Aorta (tissue), 5 donors: ENCODE measurements at regions of chr15 and their contacts with region 1.

Region 1: GRCh38 chr15:85730001-85730820 is 64.5 kb downstream of the KLHL25 start:
- DNase-seq: no peak
- ATAC-seq: peak; percentile 85
- H3K4me3 ChIP-seq: no peak overlapping the region
- H3K27ac ChIP-seq: no peak overlapping the region
- H3K4me1 ChIP-seq: no peaks in the 10 kb centered on the region
- H3K27me3 ChIP-seq: no peaks in the 10 kb centered on the region

Region 2: GRCh38 chr15:85296615-85297402 is 433.4 kb before region 1 on chr15:
- intact Hi-C with region 1: loop called in 1 of 2 experiments (anchors 10 kb)
- DNase-seq: peak in 1 of 2 donors; percentile 53
- ATAC-seq: peak; percentile 91
- H3K4me3 ChIP-seq: peak overlapping the region in 1 of 2 donors; percentile 52
- H3K27ac ChIP-seq: no peak overlapping the region
- H3K4me1 ChIP-seq: no peaks in the 10 kb centered on the region
- H3K27me3 ChIP-seq: no peaks in the 10 kb centered on the region

Region 3: GRCh38 chr15:85456798-85457197 is 273.4 kb before region 1 on chr15:
- intact Hi-C with region 1: no loop called
- DNase-seq: no peak
- ATAC-seq: no peak
- H3K4me3 ChIP-seq: no peak overlapping the region
- H3K27ac ChIP-seq: no peak overlapping the region
- H3K4me1 ChIP-seq: no peaks in the 10 kb centered on the region
- H3K27me3 ChIP-seq: no peaks in the 10 kb centered on the region

Region 4: DNA sequence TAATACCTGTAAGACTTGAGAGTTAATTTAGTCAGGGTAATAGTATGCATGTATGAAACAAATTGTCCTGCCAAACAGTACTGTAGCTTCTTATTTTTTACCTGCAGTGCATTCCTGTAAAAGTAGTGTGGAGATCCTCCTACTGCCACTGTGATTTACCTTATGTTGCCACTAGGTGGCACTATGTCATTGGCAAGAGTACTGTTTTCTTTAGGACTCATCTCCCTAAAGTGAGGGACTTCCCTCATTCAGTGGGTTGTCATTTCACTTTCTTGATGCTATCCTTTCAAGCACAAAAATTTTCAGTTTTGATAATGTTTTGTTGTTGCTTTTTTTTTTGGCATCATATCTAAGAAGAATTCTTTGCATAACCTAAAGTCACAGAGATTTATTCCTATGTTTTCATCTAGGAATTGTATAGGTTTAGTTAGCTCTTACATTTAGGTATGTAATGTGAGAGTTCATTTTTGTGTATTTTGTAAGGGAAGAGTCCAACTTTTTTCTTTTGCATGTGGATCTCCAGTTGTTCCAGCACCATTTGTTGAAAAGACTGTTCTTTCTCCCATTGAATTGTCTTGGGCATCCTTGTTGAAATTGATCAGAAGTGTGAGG is 244.1 kb before region 1 on chr15:
- intact Hi-C with region 1: loop called in 1 of 2 experiments (anchors 10 kb)
- DNase-seq: no peak
- ATAC-seq: peak; percentile 91
- H3K4me3 ChIP-seq: no peak overlapping the region
- H3K27ac ChIP-seq: no peak overlapping the region
- H3K4me1 ChIP-seq: no peaks in the 10 kb centered on the region
- H3K27me3 ChIP-seq: no peaks in the 10 kb centered on the region

Region 5: DNA sequence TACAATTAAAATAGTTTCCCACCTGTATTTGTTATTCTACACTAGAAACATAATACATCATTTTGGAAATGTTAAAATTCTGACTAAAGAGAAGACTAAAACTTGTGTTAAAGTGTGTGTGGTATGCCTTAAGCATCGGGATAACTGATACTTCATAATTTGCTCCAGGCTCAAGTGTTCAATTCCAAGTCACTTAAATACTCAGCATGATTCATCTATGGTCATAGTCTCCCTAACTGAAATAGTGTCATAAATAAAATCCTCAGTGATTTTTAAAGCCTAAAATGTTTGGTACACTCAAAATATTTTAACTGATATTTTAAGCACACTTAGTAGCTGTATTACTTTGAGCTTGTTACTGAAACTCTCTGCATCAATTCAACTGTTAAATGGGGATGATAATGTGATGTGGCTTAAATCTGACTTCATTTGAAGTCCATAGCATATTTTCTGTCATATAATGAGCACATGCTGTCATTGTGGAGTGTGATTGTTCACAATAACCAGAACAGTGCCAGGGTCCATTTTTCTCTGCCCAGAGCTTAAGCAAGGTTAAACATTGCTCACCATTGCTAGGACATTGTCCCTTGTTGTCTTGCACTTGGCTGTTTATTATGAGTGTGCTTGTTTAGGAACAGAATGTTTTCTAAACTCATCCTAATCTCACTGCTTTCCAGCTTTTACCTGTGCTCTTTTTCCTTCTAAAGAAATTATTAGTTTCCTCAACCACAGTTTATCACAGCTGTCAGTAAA is 57.7 kb before region 1 on chr15:
- intact Hi-C with region 1: no loop called
- DNase-seq: no peak
- ATAC-seq: no peak
- H3K4me3 ChIP-seq: no peak overlapping the region
- H3K27ac ChIP-seq: peak overlapping the region; percentile 14 to 44
- H3K4me1 ChIP-seq: peaks cover 4 to 7% of the 10 kb centered on the region in 2 donors
- H3K27me3 ChIP-seq: no peaks in the 10 kb centered on the region

Region 6: GRCh38 chr15:85778107-85778776 is 48.0 kb after region 1 on chr15:
- intact Hi-C with region 1: no loop called
- DNase-seq: no peak
- ATAC-seq: no peak
- H3K4me3 ChIP-seq: no peak overlapping the region
- H3K27ac ChIP-seq: no peak overlapping the region
- H3K4me1 ChIP-seq: no peaks in the 10 kb centered on the region
- H3K27me3 ChIP-seq: no peaks in the 10 kb centered on the region

Region 7: DNA sequence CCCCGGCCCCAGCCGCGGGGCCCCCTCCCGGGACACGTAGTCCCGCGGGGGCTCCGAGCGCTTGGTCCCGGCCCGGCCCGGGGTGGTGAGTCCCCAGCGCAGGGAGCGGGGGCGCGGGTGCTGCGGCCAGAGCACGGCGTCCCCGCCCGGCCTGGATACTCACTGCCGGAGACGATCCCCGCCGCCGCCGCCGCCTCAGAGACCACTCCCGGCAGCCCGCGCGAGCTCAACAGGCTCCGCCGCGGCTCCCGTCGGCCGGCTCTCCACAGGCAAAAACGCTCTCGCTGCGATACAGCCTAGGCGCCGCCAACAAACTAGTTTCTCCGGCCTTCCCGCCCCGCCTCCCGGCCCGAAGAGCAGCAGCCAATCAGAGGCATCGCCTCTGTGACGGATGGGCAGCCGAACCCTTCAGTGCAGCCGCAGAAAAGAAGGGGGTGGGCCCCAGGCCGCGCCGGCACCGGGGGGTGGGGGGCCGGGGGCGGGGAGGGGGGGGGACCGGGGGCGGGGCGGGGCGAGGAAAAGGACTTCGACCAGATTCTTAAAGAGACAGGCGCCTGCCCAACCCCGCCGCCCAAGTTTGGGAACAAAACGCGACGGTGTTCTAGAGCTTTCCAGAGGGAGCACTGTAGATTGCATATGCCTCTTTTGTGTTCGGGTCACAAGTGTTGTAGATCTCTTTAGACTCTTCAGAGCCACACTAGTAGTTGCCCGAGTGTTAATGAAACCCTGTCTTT is 64.6 kb after region 1 on chr15 and contains the start of gene KLHL25:
- intact Hi-C with region 1: loop called in 1 of 2 experiments (anchors 2 kb)
- DNase-seq: peak; percentile 97
- ATAC-seq: peak; percentile 97
- H3K4me3 ChIP-seq: peak within 1 kb of the TSS; percentile 71 to 92
- H3K27ac ChIP-seq: peak within 1 kb of the TSS; percentile 53 to 85
- H3K4me1 ChIP-seq: no peaks in the 10 kb centered on the region
- H3K27me3 ChIP-seq: no peaks in the 10 kb centered on the region
- total RNA-seq, gene KLHL25: 6.4 to 9.2 TPM

Region 8: GRCh38 chr15:85831415-85832113 is 101.4 kb after region 1 on chr15:
- intact Hi-C with region 1: loop called (anchors 2 to 5 kb)
- DNase-seq: peak; percentile 73 to 84
- ATAC-seq: peak; percentile 85
- H3K4me3 ChIP-seq: no peak overlapping the region
- H3K27ac ChIP-seq: no peak overlapping the region
- H3K4me1 ChIP-seq: no peaks in the 10 kb centered on the region
- H3K27me3 ChIP-seq: no peaks in the 10 kb centered on the region

Region 9: GRCh38 chr15:85839643-85840042 is 109.4 kb after region 1 on chr15:
- intact Hi-C with region 1: loop called (anchors 2 to 5 kb)
- DNase-seq: no peak
- ATAC-seq: no peak
- H3K4me3 ChIP-seq: no peak overlapping the region
- H3K27ac ChIP-seq: no peak overlapping the region
- H3K4me1 ChIP-seq: no peaks in the 10 kb centered on the region
- H3K27me3 ChIP-seq: peaks cover 0 to 2% of the 10 kb centered on the region in 2 donors